Breast epithelium (tissue), 4 donors: ENCODE measurements at regions of chr5 and their contacts with region 1.

Region 1: DNA sequence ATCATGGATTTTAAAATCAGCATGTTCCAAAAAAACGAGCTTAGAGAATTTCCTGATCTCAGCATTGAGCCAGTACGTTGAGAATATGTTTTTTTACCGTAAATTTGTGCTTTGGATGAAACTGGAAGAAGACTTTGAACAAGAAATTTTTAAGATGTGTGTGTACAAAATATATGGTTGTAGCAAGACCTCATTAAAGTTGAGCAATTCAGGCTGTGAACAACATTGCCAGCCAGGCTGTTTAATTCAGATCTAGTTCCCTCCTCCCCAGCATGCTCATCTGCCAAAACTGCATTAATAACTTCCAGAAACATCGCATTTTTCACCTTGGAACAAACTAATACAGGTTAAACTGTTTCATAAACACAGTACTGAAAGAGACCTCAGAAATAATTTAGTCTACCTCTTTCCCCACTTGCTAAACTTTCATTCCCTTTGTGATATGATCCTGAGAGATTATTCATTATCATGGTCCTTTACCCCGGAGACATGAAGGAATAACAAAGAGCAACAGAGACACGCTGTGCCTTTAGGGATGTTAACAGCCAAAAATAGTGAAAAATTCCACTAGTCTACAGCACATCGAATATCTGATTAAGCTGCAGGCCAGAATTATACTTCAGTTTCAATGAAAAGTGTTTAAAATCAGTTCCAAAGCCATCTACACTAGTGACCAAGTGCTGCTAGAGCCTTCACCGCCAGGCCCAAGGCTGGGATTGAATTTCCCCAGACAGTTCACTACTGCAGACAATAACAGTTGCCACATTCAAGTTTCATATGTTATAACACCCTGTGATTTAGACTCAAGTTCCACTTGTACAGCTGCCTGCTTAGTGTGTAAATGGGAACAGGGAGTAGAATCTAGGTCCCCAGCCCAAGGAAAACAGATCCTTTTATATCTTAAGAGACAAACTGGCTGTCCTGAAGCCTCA is 89.6 kb downstream of the EFNA5 start:
- DNase-seq: no peak
- H3K4me3 ChIP-seq: no peak overlapping the region
- H3K27ac ChIP-seq: peak overlapping the region; percentile 0 to 65
- H3K4me1 ChIP-seq: no peaks in the 10 kb centered on the region
- H3K27me3 ChIP-seq: no peaks in the 10 kb centered on the region
- CTCF ChIP-seq: no peak
- POLR2A ChIP-seq: no peak

Region 2: GRCh38 chr5:107513337-107514085 is 67.6 kb before region 1 on chr5:
- intact Hi-C with region 1: loop called (anchors 2 kb)
- DNase-seq: no peak
- H3K4me3 ChIP-seq: no peak overlapping the region
- H3K27ac ChIP-seq: no peak overlapping the region
- H3K4me1 ChIP-seq: no peaks in the 10 kb centered on the region
- H3K27me3 ChIP-seq: no peaks in the 10 kb centered on the region
- CTCF ChIP-seq: no peak
- POLR2A ChIP-seq: no peak